ENCODE measurements at regions of chr18 and their contacts with region 1.

Region 1: GRCh38 chr18:48975649-48976204 is 25.0 kb upstream of the SMAD7 start:
- DNase-seq: peak; percentile 72 to 83
- ATAC-seq: peak; percentile 81 to 83 (median 82)
- H3K4me3 ChIP-seq: peak overlapping the region; percentile 79
- H3K27ac ChIP-seq: peak overlapping the region; percentile 90
- H3K4me1 ChIP-seq: no peaks in the 10 kb centered on the region
- H3K27me3 ChIP-seq: no peaks in the 10 kb centered on the region
- CTCF ChIP-seq: no peak

Region 2: DNA sequence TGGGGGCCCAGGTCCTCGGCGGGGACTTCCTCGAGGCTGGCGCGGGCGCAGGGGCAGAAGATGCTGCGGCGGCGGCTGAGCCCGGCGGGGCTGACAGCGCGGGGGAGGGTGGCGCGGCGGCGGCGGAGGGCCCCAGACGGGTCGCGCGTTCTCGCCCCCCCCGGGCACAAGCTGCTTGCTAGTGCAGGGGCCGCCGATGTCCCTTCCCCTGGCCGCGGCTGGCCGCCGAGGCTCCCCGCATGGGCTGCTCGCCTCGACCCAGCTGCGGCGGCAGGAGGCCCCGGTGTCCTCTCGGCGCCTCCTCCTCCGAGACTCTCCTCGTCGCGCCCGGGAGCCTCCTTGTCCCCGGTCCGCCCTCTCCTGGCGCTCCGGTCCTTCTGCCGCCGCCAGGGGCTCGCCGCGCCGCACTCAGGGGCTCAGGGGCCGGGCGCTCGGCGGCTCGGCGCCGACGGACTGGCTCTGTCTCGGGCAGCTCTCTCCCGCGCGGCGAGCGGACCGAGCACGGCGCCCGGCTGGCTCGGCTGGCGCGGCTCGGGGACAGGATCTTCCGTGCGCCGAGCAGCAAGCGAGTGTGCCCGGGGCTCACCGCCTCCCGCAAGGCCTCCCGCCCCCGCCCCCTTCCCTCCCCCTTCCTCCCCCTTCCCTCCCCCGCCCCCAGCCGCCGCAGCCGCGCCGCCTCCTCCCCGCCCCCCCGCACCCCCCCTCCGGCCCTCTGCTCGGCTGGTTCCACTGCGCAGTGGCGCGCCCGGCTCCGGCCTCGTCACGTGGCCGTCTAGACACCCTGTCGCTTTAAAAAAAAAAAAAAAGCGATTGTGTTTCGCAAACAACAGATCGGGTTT is 24.1 kb before region 1 on chr18:
- intact Hi-C with region 1: loop called in 1 of 2 experiments (anchors 2 kb)
- DNase-seq: peak; percentile 92 to 94
- ATAC-seq: peak; percentile 69 to 77 (median 74)
- H3K4me3 ChIP-seq: peak overlapping the region; percentile 79
- H3K27ac ChIP-seq: peak overlapping the region; percentile 99
- H3K4me1 ChIP-seq: peaks cover 42% of the 10 kb centered on the region
- H3K27me3 ChIP-seq: no peaks in the 10 kb centered on the region
- CTCF ChIP-seq: peak; percentile 40

Region 3: GRCh38 chr18:49400398-49401072 is 424.8 kb after region 1 on chr18:
- intact Hi-C with region 1: no loop called
- DNase-seq: no peak
- ATAC-seq: no peak
- H3K4me3 ChIP-seq: no peak overlapping the region
- H3K27ac ChIP-seq: no peak overlapping the region
- H3K4me1 ChIP-seq: no peaks in the 10 kb centered on the region
- H3K27me3 ChIP-seq: no peaks in the 10 kb centered on the region
- CTCF ChIP-seq: no peak